ENCODE measurements at regions of chr10 and their contacts with region 1.

Region 1: GRCh38 chr10:18214691-18215563 is 74.7 kb downstream of the CACNB2 start:
- DNase-seq: no peak
- ATAC-seq: peak; percentile 75 to 82

Region 2: DNA sequence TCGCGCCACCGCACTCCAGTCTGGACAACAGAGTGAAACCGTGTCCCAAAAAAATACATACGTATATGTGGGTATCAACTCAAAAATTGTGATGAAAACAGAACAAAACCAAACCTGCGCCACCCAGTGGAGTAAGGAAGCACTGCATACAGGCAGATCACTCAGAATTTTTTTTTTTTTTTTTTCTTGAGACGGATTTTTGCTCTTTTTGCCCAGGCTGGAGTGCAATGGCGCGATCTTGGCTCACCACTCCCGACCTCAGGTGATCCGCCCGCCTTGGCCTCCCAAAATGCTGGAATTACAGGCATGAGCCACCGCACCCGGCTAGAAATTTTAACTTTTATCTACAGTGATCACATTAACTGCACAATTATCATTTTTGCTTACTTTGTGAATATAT is 472.0 kb before region 1 on chr10:
- intact Hi-C with region 1: loop called in 1 of 2 experiments (anchors 10 kb)
- DNase-seq: peak; percentile 68
- ATAC-seq: peak in 1 of 2 donors; percentile 16

Region 3: GRCh38 chr10:17847585-17848296 is 367.2 kb before region 1 on chr10:
- intact Hi-C with region 1: loop called (anchors 2 to 5 kb)
- DNase-seq: no peak
- ATAC-seq: no peak

Region 4: DNA sequence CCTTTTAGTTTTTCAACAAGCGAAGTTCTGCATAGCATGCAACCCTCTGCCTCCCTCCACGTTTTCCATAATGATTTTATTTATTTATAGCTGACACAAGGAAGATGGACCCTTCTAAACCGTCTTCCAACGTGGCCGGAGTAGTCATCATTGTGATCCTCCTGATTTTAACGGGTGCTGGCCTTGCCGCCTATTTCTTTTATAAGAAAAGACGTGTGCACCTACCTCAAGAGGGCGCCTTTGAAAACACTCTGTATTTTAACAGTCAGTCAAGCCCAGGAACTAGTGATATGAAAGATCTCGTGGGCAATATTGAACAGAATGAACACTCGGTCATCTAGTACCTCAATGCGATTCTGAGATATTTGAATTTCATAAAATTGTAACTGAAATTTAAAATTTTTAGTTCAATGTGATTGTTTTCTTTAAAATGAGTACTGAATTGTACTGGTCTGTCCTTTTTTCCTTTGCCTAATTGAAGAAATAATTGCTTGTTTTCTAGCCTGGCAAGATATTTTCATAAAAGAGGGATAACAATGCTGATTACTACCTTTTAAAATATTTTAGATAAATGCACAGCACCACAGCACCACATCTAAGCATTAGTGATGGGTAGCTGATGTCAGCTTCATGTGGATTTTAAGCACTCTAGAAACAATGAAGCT is 304.7 kb before region 1 on chr10:
- intact Hi-C with region 1: loop called in 1 of 2 experiments (anchors 2 kb)
- DNase-seq: peak; percentile 43
- ATAC-seq: no peak

Region 5: GRCh38 chr10:18140149-18140956 is 74.6 kb before region 1 on chr10 and contains the start of gene CACNB2:
- intact Hi-C with region 1: loop called in 1 of 2 experiments (anchors 5 kb)
- DNase-seq: peak; percentile 76
- ATAC-seq: peak; percentile 85 to 87
- total RNA-seq, gene CACNB2: 23.7 to 34.3 TPM

Region 6: DNA sequence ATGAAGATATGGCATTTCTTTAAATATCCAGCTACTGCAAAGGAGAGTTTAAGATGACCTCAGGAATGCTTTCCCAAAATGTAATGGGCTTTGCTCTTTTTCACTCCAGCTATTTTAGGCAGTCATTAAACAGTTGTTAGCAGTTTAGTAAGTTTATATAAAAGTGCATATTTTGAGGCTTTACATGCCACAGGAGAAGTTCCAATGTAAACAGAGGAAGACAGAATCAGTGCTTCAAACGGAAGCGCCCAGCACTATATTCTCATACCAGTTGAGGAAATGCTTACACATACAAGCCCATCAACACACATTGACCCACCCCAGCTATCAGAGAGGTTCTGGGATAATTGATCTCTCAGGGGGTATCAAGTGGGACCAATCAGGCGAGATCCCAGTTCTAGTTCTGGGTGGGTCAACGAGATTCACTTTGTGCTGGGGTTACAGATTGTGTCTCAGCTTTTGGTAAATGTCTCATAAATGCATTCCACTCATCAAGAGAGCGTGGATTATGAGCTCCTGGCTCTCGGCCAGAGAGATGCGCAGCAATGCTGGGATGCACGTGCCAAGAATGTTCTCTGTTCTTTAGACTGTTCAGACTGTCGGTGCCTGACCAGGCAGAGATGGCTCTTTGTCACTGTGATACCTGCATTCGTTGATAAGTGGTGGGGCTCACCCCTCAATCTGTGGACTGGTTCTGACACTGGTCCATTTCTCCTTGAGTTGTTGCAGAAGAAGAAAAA is 19.7 kb before region 1 on chr10:
- intact Hi-C with region 1: no loop called
- DNase-seq: no peak
- ATAC-seq: peak; percentile 67 to 85

Region 7: DNA sequence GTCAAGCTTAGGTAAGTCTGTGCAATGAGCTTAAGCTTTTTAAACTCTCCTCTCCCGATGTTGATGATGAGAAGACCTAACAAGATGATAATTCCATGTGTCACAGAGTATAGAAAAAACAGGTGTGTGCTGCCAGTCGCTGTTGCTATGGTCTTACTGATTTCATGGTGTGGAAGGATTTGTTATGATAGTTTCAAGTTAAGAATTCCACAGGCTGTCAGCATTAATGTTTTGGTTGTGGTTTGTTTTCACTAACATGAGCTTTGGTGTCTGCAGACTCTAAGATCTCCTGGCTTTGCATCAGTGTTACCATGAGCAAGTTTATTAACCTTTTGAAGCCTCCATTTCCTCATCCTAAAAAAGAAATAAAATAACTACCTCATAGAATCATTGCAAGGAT is 312.8 kb after region 1 on chr10:
- intact Hi-C with region 1: no loop called
- DNase-seq: no peak
- ATAC-seq: no peak

Measured in left cardiac atrium (tissue), 4 donors.